ENCODE measurements at regions of chr17 and their contacts with region 1.

Region 1: DNA sequence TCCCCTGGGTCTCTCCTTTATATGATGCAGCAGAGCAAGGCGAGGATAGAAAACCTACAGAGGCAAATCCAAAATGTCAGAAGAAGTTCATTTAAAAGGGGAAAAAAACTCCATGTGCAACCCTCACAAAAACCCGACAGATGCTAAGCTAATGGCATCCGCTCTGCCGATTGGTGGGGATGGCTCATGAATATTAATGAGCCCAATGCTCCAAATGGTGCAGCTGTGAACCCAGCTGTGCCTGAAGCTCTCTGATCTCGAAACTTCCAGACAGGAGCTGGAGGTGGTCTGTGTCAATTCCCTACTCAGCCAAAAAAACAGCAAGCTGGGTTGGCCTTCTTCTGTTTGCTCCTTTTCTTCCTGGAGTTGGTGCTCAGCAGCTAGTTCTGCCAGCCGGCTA is 15.5 kb downstream of the SNX11 start:
- DNase-seq: no peak
- ATAC-seq: no peak
- H3K4me3 ChIP-seq: no peak overlapping the region
- H3K27ac ChIP-seq: no peak overlapping the region
- H3K4me1 ChIP-seq: no peaks in the 10 kb centered on the region
- H3K27me3 ChIP-seq: no peaks in the 10 kb centered on the region
- CTCF ChIP-seq: no peak
- EP300 ChIP-seq: no peak
- POLR2A ChIP-seq: no peak
- RAD21 ChIP-seq: no peak

Region 2: DNA sequence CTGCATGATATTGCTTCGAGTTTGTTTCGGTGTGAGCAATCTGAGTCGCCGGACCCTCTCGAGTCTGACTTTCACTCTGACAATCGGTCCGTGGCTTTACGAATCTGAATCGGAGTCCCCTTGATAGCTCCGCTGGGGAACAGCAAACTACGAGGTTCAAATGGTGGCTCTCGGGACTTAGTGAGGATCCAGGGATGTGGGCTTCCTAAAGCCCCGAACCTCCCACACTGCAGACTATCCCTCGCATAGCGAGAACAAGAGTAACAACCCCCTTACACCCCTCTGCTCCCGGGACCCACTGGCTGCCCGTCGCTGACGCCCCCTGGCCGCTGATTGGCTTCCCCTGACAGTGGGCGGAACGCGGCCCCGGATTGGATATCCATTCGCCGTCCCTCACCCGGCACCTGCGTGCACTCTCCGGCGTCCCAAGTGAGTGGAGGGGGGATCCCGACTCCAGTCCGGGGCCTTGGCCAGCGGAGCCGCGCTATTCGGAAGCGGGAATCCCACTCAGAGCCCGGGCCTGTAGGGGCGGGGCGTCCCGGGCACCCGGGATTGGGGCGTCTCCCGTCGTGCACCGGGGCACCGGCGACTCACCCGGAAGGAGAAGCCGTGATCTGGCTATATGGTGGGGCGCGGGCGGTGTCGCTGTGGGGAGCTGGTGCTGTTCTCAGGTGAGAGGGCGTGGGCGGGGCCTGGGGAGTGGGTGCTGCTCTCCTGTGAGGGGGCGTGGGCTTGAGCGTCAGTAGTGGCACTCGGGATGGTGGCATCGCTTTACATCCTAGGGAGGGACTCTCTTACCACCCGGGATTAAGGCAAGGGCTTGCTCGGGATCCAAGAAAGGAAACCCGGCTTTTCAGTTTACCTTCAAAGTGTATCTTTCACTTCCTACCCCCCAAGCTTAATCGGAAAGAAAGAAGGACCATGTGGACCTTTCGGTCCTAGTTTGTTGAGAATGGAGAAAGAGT is 15.7 kb before region 1 on chr17 and contains the start of gene SNX11:
- CTCF ChIA-PET with region 1: interaction called, 102 read pairs
- POLR2A ChIA-PET with region 1: interaction called, 20 read pairs
- RAD21 ChIA-PET with region 1: interaction called, 43 read pairs
- SMC1A ChIA-PET with region 1: interaction called, 54 read pairs
- in situ Hi-C with region 1: no loop called
- intact Hi-C with region 1: no loop called
- DNase-seq: no peak
- ATAC-seq: peak; percentile 88
- H3K4me3 ChIP-seq: peak within 1 kb of the TSS; percentile 97
- H3K27ac ChIP-seq: peak within 1 kb of the TSS; percentile 80
- H3K4me1 ChIP-seq: peaks cover 6% of the 10 kb centered on the region
- H3K27me3 ChIP-seq: no peaks in the 10 kb centered on the region
- CTCF ChIP-seq: peak in 2 of 3 experiments; percentile 7 to 20; a peak in 1 of 6 replicates
- EP300 ChIP-seq: no peak
- POLR2A ChIP-seq: peak; percentile 91
- RAD21 ChIP-seq: no peak
- polyA plus RNA-seq, gene SNX11: 61.3 to 75.6 TPM